AG04449 (cell line): ENCODE measurements at regions of chrX and their contacts with region 1.

Region 1: DNA sequence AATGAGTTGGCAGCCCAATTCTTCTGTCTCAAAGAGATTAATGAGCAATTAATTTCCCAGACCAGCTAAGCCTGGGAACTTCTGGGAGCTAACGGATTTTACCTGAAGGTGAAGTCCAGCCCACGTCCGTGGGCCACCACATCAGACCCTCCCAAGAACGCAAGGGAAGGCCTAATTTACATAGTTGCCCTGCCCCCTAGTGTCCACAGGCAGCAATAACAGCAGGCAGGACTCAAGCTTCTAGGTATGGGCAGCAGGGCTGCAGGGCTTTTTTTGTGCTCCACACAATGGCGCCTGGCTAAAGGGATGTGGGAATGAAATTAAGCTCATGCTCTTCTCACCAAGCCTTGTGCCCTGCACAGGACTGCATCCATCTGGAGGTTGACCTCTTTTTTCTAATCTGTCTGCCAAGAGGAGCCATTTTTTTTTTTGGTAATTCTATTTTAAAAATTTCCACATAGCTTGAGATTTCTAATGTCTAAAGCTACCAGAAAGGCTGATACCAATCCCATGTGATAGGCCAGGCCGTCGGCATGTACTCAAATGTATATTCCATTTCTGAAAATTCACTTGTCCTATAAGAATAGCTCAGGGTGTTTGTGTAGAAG is 111.9 kb upstream of the TMEM164 start:
- DNase-seq: no peak
- H3K4me3 ChIP-seq: no peak overlapping the region
- CTCF ChIP-seq: peak; percentile 77

Region 2: GRCh38 chrX:109485470-109486340 is 405.3 kb before region 1 on chrX:
- CTCF ChIA-PET with region 1: interaction called, 125 read pairs
- POLR2A ChIA-PET with region 1: no interaction called
- DNase-seq: no peak
- H3K4me3 ChIP-seq: no peak overlapping the region
- CTCF ChIP-seq: peak; percentile 75

Region 3: DNA sequence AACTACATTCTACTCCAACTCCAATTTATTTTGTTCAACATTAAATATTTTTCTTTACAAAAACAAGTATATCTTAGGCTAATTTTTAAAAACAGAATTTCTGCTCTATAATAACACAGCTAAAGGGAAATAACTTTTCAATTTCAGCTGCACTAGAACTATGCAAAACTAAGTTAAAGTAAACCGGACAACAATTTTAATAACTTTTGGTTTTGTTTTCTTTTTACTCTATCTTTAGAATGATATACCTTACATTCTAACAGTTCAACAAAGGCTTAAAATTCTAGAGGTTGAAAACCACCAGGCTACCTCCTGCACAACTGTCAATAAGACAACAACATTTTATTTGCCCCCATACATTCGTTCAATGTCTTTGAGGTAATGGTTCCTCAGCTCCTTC is 247.3 kb before region 1 on chrX:
- CTCF ChIA-PET with region 1: interaction called, 10 read pairs
- POLR2A ChIA-PET with region 1: no interaction called
- DNase-seq: no peak
- H3K4me3 ChIP-seq: no peak overlapping the region
- CTCF ChIP-seq: no peak

Region 4: GRCh38 chrX:109709129-109709631 is 181.8 kb before region 1 on chrX:
- CTCF ChIA-PET with region 1: interaction called, 219 read pairs
- POLR2A ChIA-PET with region 1: no interaction called
- DNase-seq: no peak
- H3K4me3 ChIP-seq: no peak overlapping the region
- CTCF ChIP-seq: no peak

Region 5: DNA sequence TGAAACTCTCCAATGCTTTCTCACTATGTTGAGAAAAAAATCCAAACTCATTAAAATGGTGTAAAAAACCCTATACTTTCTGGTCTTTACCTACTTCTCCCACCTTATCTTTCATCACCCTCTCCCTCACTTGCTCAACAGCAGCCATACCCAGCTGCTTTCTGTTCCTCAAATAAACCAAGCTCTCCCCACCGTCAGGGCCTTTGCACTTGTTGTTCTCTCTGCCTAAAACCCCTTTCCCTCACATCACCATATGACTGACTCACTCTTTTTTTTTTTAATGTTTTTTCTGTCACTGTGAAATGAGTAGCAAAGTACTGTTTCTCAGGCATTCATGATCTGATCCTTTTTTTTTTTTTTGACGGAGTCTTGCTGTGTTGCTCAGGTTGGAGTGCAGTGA is 10.4 kb before region 1 on chrX:
- CTCF ChIA-PET with region 1: interaction called, 34 read pairs
- POLR2A ChIA-PET with region 1: no interaction called
- DNase-seq: no peak
- H3K4me3 ChIP-seq: no peak overlapping the region
- CTCF ChIP-seq: no peak

Region 6: GRCh38 chrX:110146521-110146920 is 255.5 kb after region 1 on chrX:
- CTCF ChIA-PET with region 1: interaction called, 24 read pairs
- POLR2A ChIA-PET with region 1: no interaction called
- DNase-seq: no peak
- H3K4me3 ChIP-seq: no peak overlapping the region
- CTCF ChIP-seq: peak; percentile 53